PC-3 (cell line): ENCODE measurements at regions of chr1 and their contacts with region 1.

Region 1: GRCh38 chr1:206556750-206557635 is 49.7 kb downstream of the RASSF5 start:
- DNase-seq: peak; percentile 80
- ATAC-seq: peak; percentile 69
- H3K4me3 ChIP-seq: peak overlapping the region; percentile 78
- H3K27ac ChIP-seq: peak overlapping the region; percentile 3; the same call in 1 of the 2 replicates
- H3K4me1 ChIP-seq: peaks cover 28% of the 10 kb centered on the region
- H3K27me3 ChIP-seq: no peaks in the 10 kb centered on the region
- CTCF ChIP-seq: no peak

Region 2: GRCh38 chr1:206513312-206514111 is 43.5 kb before region 1 on chr1:
- CTCF ChIA-PET with region 1: no interaction called
- POLR2A ChIA-PET with region 1: no interaction called
- intact Hi-C with region 1: loop called (anchors 1 kb)
- DNase-seq: peak; percentile 98
- ATAC-seq: peak; percentile 93
- H3K4me3 ChIP-seq: peak overlapping the region; percentile 28; the same call in 1 of the 2 replicates
- H3K27ac ChIP-seq: peak overlapping the region; percentile 78
- H3K4me1 ChIP-seq: peaks cover 38% of the 10 kb centered on the region
- H3K27me3 ChIP-seq: no peaks in the 10 kb centered on the region
- CTCF ChIP-seq: no peak

Region 3: DNA sequence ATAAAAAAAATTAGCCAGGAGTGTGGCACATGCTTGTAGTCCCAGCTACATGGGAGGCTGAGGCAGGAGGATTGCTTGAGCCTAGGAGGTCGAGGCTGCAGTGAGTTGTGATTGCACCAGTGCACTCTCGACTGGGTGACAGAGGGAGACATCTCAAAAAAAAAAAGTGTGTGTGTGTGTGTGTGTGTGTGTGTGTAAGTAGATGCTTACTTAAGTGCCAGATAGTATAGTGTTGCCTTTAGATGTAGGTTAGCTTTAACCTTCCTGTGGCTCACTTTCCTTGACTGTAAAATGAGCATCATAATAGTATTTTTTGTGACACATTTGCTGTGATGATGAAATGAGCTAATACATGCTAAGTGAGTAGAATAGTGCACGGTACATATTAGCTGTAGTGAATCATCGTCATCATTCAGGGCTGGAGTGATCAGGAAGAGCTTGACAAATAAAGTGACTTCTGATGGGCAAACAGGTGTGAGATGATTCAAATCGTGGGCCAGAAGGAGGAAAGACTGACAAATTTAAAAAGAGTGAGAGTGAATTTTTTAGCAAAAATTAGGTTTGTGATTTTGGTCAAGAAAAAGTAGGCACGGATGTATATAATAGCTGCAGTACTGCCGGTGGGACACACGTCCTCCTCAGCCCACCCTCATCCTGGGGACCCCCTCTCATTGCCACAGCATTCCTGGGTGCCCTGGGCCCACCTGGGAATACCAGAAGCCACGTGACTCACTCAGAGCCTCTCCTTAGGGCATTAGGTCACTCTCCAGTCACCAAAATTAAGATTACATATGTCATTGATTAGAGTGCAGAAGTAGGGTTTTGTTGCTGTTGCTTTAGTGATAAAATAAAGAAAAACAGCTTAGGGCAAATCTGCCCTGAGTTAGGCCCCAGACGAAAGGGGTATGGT is 21.3 kb after region 1 on chr1:
- CTCF ChIA-PET with region 1: interaction called, 6 read pairs
- POLR2A ChIA-PET with region 1: interaction called, 3 read pairs
- intact Hi-C with region 1: loop called (anchors 1 kb)
- DNase-seq: peak; percentile 83
- ATAC-seq: peak; percentile 50
- H3K4me3 ChIP-seq: no peak overlapping the region
- H3K27ac ChIP-seq: no peak overlapping the region
- H3K4me1 ChIP-seq: peaks cover 28% of the 10 kb centered on the region
- H3K27me3 ChIP-seq: no peaks in the 10 kb centered on the region
- CTCF ChIP-seq: no peak

Region 4: DNA sequence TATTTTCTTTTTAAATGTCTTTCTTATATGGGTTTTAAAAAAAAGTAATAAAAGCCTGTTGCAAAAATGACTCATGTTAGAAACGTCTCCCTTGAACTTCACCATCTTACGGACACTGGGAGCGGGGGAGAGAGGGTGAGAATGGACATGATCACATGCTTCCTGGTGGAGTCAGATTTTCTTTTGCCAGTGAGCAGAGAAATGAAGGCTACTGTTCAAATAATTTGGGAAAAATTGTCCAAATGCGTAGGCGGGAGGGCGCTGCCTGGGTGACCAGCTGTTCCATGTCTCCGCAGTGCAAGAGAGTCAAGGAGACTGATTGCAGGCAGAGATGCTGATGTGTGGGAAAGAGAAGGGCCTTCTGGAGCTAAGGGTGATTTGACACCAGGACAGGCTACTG is 32.2 kb after region 1 on chr1:
- CTCF ChIA-PET with region 1: no interaction called
- POLR2A ChIA-PET with region 1: no interaction called
- intact Hi-C with region 1: loop called (anchors 1 kb)
- DNase-seq: peak; percentile 92
- ATAC-seq: peak; percentile 82
- H3K4me3 ChIP-seq: peak overlapping the region; percentile 3; the same call in 1 of the 2 replicates
- H3K27ac ChIP-seq: peak overlapping the region; percentile 83
- H3K4me1 ChIP-seq: peaks cover 58% of the 10 kb centered on the region
- H3K27me3 ChIP-seq: no peaks in the 10 kb centered on the region
- CTCF ChIP-seq: no peak